ENCODE measurements at regions of chr19 and their contacts with region 1.

Region 1: GRCh38 chr19:11380653-11381534 is 3.2 kb downstream of the EPOR start:
- DNase-seq: peak; percentile 80
- H3K4me3 ChIP-seq: peak overlapping the region; percentile 82
- H3K27ac ChIP-seq: peak overlapping the region; percentile 61
- H3K27me3 ChIP-seq: peaks cover 3% of the 10 kb centered on the region
- CTCF ChIP-seq: peak; percentile 77

Region 2: DNA sequence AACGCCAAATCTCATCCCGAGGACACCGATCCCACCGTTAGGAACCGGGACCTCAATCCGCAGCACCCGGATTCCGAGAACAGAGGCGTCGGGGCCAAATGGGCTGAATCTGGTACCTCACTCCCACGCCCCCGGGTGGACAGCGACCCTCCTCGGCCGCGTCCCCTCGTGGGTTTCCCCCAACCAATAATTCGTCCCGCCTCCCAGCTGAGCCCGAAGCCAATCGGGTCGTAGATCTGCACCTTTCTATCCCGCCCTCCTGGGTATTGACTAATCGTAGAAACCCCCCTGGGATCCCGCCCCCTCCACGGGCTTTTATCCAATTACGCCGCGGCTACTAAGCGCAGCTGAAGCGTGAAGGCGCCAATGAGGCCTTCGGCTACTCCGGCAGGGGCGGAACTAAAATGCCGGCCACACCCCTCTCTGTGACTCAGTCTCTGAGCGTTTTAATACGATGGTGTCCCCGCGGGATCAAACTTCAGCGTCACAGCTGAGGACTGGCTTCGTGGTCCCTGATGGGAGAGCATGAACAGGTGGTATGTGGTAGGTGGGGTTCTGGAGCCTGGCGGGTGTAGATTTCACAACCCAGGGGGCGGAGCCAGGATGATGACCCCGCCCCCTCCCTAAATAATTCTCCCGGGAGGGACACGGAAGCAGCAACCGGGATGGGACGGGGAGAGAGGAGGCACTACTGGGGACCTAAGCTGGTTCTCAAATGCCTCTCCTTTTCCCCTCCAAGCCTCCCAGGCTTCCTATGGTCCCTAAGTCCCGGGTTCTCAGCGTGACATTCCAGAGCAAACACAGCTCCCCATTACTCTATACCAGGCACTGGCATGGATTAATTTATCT is 34.6 kb before region 1 on chr19 and contains the starts of genes CCDC159 and TMEM205:
- CTCF ChIA-PET with region 1: interaction called, 8 read pairs
- POLR2A ChIA-PET with region 1: interaction called, 10 read pairs
- DNase-seq: peak; percentile 97
- H3K4me3 ChIP-seq: peak within 1 kb of the TSS; percentile 90
- H3K27ac ChIP-seq: peak within 1 kb of the TSS; percentile 71
- H3K27me3 ChIP-seq: no peaks in the 10 kb centered on the region
- CTCF ChIP-seq: 0 out of 2 replicates have a peak, but pooled peaks have one; percentile 8
- polyA plus RNA-seq, gene CCDC159: 12.1 and 14.6 TPM in 2 replicates
- polyA plus RNA-seq, gene TMEM205: 71.9 and 90.6 TPM in 2 replicates

Region 3: GRCh38 chr19:11405846-11406643 is 25.2 kb after region 1 on chr19:
- CTCF ChIA-PET with region 1: interaction called, 11 read pairs
- POLR2A ChIA-PET with region 1: no interaction called
- DNase-seq: no peak
- H3K4me3 ChIP-seq: no peak overlapping the region
- H3K27ac ChIP-seq: no peak overlapping the region
- H3K27me3 ChIP-seq: no peaks in the 10 kb centered on the region
- CTCF ChIP-seq: peak; percentile 46

Region 4: DNA sequence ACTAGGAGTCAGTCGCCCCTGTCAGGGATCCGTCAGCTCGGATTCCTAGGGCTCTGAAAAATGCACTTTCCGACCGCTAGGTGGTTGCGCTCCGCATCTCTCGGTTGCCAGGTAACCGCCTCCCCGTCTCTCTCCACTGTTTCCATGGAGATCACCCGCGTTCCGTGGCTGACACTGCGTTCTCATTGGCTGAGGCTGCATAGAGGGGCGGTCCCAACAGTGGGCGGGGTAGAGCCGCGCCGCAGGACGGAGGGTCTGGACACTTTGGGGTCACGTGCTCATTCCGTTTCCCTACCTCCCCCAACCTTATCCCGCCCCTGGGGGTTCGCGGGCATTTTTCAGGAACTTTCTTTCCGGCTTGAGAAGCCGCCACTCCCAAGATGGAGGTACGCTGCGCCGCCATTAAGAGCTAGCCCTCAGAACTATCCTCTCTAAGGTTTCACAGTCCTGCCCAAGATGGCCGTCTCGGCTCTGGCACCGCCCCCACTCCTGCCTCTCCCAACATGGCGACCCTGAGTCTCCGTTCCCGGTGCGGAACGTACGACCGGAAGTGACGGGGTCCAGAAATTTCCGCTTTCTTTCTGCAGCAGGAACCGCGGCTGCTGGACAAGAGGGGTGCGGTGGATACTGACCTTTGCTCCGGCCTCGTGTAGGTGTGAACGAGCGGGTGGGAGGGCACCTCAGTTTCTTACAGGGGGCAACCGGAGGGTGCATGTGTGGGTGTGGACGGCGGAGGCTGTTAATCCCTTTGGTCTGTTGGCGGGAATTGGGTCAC is 54.4 kb after region 1 on chr19 and contains the starts of genes ODAD3 and PRKCSH:
- CTCF ChIA-PET with region 1: interaction called, 11 read pairs
- POLR2A ChIA-PET with region 1: interaction called, 3 read pairs
- DNase-seq: peak; percentile 99
- H3K4me3 ChIP-seq: peak within 1 kb of the TSS; percentile 99
- H3K27ac ChIP-seq: peak within 1 kb of the TSS; percentile 61
- H3K27me3 ChIP-seq: no peaks in the 10 kb centered on the region
- CTCF ChIP-seq: peak; percentile 91
- polyA plus RNA-seq, gene ODAD3: 0.09 and 0.21 TPM in 2 replicates
- polyA plus RNA-seq, gene PRKCSH: 125 and 165 TPM in 2 replicates

Region 5: GRCh38 chr19:11881151-11881800 is 500.4 kb after region 1 on chr19:
- CTCF ChIA-PET with region 1: no interaction called
- POLR2A ChIA-PET with region 1: no interaction called
- DNase-seq: no peak
- H3K4me3 ChIP-seq: no peak overlapping the region
- H3K27ac ChIP-seq: no peak overlapping the region
- H3K27me3 ChIP-seq: peaks cover 4% of the 10 kb centered on the region
- CTCF ChIP-seq: peak; percentile 83